Natural killer cell (primary cell): ENCODE measurements at regions of chr5 and their contacts with region 1.

Region 1: DNA sequence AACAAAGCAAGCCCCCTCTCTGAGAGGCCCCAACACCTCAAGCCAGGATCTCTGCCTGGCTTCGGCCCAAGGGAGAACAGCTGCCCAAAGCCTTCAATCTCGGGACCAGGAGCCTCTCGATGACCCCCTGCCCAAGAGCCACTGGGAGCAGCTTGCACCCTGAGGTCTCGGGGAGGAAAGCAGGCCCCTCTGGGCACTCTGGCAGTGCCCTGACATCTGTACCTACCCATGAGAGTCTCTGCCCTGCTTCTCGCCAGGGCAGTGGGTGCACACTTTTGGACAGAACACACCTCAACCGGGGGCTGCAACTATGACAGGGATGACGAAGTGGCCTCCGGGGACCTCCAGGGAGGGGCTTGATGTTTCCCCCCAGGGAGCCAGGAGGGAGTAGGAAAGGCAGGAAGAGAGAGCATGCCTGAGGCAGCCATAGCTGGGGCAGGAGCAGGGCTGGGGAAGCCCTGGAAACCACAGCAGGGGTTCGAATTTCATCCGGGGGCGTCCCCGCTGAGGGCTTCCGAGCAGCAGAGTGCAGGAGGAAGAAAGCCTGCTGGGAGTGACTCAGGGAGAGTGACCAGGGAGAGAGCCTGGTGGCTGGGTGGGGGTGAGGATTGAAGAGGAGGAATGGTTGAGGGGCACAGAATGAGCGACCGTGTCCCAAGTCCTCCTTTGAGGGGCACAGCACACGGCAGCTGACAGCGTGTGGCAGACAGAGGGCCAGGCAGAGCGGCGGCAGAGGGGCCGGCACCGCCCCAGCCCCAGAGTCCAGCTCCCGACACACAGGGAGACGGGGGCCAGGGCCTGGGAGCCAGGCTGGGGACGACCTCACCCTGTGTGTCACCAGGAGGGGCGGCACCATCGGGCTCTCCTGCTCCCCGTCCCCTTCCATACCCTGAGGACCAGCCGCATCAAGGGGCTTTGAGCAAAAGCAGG is 1.8 kb downstream of the LPCAT1 start:
- DNase-seq: peak in 1 of 2 donors; percentile 17
- ATAC-seq: no peak
- H3K4me3 ChIP-seq: peak overlapping the region; percentile 68
- H3K4me3 Mint-ChIP-seq: peak overlapping the region; percentile 96
- H3K27ac ChIP-seq: peak overlapping the region; percentile 46
- H3K27ac Mint-ChIP-seq: peak overlapping the region; percentile 95 to 96
- H3K4me1 ChIP-seq: peaks cover 71% of the 10 kb centered on the region
- H3K4me1 Mint-ChIP-seq: peaks cover 53 to 73% of the 10 kb centered on the region in 2 donors
- H3K27me3 ChIP-seq: no peaks in the 10 kb centered on the region
- H3K27me3 Mint-ChIP-seq: no peaks in the 10 kb centered on the region
- CTCF ChIP-seq: no peak

Region 2: DNA sequence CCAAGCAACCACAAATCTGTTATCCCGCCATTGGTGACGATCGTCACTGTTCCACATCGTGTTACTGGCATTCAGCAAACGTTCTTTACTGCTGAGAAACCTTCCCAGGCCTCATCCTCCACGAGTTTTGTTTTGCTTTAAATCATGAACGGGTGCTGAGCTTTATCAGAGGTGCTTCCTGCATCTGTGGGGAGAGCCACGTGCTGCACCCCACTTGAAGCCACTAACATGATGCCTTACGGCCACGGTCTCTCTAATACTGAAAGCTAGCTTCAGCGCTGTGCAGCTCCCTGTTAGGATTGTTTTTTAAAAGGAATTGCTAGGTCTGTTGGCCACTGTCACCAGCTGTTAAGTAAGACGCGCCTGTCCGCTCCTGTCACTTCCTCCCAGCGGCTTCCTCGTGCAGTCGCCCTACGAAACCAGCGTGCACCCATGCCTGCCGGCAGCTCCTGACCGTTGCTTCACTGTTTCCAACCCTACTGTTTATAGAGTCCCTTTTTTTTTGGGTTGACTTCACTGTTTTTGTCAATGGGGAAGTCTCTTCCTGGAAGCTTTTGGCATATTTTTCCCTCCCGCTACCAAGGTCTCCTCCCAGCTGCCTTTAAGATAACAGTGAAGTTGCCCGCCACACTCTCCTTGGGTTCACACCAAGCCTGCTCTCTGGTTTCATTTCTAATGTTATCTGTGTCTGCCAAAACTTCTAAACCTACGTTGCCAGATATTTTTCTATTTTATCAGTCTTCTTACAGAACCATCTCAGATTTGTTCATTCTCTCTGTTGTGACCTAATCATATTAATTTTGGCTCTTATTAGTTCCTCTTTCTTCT is 18.5 kb before region 1 on chr5:
- intact Hi-C with region 1: loop called (anchors 1 kb)
- DNase-seq: peak; percentile 50 to 58
- ATAC-seq: peak; percentile 30 to 51 (median 39)
- H3K4me3 ChIP-seq: peak overlapping the region; percentile 5
- H3K4me3 Mint-ChIP-seq: peak overlapping the region; percentile 83
- H3K27ac ChIP-seq: peak overlapping the region; percentile 89
- H3K27ac Mint-ChIP-seq: peak overlapping the region; percentile 91 to 97
- H3K4me1 ChIP-seq: peaks cover 96% of the 10 kb centered on the region
- H3K4me1 Mint-ChIP-seq: peaks cover 84 to 95% of the 10 kb centered on the region in 2 donors
- H3K27me3 ChIP-seq: no peaks in the 10 kb centered on the region
- H3K27me3 Mint-ChIP-seq: no peaks in the 10 kb centered on the region
- CTCF ChIP-seq: no peak